ENCODE measurements at regions of chr1 and their contacts with region 1.

Region 1: DNA sequence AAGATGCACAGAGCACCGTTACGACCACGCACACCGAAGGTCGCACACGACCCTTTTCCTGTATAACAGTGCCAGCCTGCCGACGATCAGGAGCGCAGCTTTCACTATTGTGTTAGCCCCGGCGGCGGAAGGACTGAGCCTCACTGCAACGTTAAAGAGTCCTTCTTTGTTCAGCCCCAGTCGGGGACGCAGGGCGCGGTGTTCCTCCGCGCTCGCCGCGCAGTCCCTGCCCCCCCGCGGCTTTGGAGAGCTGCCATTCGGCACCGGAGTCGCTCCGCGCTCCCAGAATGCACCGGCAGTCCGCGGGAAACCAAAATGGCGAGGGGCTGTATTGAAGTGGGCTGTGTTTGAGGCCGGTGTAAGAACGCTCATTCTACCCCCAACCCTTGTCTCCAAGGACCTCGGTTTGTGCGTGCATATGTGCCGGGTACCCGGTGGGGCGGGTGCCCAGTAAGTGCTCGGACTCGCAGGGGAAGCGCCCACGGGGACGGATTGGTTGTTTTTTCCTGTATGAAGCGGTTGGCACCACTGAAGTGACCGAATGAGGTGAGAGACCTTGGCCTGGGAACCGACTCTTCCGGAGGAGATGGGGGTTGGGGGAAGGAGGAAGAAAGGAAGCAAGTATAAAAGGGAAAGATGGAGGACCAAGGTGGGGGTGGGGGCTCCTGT is at the start of gene MTF2:
- DNase-seq: peak; percentile 87 to 96 (median 92)
- ATAC-seq: peak; percentile 85
- H3K4me3 ChIP-seq: peak within 1 kb of the TSS; percentile 86
- H3K4me3 Mint-ChIP-seq: peak within 1 kb of the TSS; percentile 99
- H3K27ac ChIP-seq: peak within 1 kb of the TSS; percentile 81 to 82
- H3K27ac Mint-ChIP-seq: peak within 1 kb of the TSS; percentile 96
- H3K4me1 ChIP-seq: peaks cover 17% of the 10 kb centered on the region
- H3K4me1 Mint-ChIP-seq: peaks cover 61% of the 10 kb centered on the region
- H3K27me3 ChIP-seq: no peaks in the 10 kb centered on the region
- H3K27me3 Mint-ChIP-seq: no peaks in the 10 kb centered on the region
- CTCF ChIP-seq: no peak
- total RNA-seq, gene MTF2: 37.9 to 39.3 TPM

Region 2: DNA sequence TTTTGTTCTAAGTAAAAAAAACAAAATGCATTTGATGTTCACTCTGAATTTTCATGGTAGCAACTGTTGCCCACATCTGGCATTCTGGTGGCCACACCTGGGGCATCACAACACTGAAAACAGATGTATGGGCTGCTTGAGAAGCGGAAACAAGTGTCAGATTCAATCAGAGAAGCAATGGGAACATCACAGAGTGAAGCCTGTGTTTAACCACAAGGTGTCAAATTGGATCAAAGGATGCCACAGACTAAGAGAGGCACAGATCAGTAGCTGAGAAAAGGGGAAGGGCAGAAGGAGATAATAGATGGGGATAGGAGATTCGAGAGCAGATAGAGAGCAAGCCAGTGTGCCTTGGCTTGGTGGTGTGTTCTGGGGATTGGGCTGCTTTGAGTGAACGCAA is 49.8 kb before region 1 on chr1:
- CTCF ChIA-PET with region 1: no interaction called
- POLR2A ChIA-PET with region 1: interaction called, 4 read pairs
- intact Hi-C with region 1: loop called in 1 of 2 experiments (anchors 5 kb)
- DNase-seq: peak in 10 of 14 experiments; percentile 9 to 80 (median 36)
- ATAC-seq: peak; percentile 92
- H3K4me3 ChIP-seq: no peak overlapping the region
- H3K4me3 Mint-ChIP-seq: peak overlapping the region; percentile 1
- H3K27ac ChIP-seq: peak overlapping the region in 1 of 2 donors; percentile 32
- H3K27ac Mint-ChIP-seq: peak overlapping the region; percentile 18
- H3K4me1 ChIP-seq: peaks cover 18% of the 10 kb centered on the region
- H3K4me1 Mint-ChIP-seq: peaks cover 30% of the 10 kb centered on the region
- H3K27me3 ChIP-seq: no peaks in the 10 kb centered on the region
- H3K27me3 Mint-ChIP-seq: no peaks in the 10 kb centered on the region
- CTCF ChIP-seq: no peak

Region 3: DNA sequence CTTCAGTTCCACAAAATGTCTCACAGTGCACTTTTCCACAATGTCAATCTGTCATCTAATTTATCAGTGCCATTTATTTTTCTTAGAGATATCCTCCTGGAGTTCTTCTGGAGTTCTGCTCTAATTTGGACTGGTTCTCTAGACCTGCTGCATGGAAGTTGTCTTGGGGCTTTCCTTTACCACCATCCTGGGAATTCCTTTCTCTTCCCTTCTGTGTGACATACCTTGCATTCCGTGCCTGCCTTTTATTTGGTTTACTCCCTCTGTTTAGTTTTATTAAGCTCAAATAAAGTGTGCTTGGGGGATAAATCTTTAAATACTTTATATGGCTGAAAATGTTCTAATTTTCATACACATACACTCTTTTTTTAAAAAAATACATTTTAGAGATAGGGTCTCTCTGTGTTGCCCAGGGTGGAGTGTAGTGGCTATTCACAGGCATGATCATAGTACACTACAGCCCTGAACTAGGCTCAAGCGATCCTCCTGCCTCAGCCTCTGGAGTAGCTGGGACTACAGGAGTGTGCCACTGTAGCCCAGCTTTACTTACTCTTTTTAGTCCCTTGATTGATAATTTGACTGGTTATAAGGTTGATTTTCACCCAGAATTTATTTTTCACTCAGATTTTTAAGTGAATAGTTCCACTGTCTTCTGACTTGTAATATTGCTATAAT is 14.3 kb after region 1 on chr1:
- CTCF ChIA-PET with region 1: interaction called, 7 read pairs
- POLR2A ChIA-PET with region 1: interaction called, 18 read pairs
- intact Hi-C with region 1: no loop called
- DNase-seq: no peak
- ATAC-seq: no peak
- H3K4me3 ChIP-seq: no peak overlapping the region
- H3K4me3 Mint-ChIP-seq: no peak overlapping the region
- H3K27ac ChIP-seq: no peak overlapping the region
- H3K27ac Mint-ChIP-seq: peak overlapping the region; percentile 38
- H3K4me1 ChIP-seq: peaks cover 11% of the 10 kb centered on the region
- H3K4me1 Mint-ChIP-seq: peaks cover 73% of the 10 kb centered on the region
- H3K27me3 ChIP-seq: no peaks in the 10 kb centered on the region
- H3K27me3 Mint-ChIP-seq: no peaks in the 10 kb centered on the region
- CTCF ChIP-seq: no peak

Region 4: DNA sequence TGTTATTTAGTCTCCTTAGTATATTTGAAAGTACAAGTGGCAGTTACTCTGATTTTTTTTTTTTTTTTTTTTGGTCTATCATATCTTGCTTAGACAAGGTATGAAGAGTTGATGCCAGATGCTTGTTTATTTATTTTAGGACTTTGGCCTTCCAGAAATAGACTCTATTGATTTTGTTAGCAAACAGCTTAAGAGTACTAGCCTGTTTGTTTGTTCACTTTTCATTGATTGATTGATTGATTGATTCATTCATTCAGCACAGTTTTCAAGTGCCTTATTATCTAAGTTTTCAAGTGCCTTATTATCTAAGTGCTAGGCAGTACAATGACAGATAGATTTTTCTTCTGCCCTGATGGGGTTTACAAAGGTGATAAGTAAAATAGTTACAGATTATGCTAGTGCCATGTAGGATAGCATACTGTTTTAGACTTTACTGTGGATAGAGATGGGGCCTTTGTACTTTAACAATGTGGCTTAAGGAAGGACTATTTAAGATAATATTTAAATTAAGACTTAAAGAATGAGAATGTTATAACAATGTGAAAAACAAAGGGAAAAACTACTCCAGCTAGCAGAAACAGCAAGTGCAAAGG is 50.5 kb after region 1 on chr1:
- CTCF ChIA-PET with region 1: no interaction called
- POLR2A ChIA-PET with region 1: no interaction called
- intact Hi-C with region 1: loop called in 1 of 2 experiments (anchors 5 kb)
- DNase-seq: no peak
- ATAC-seq: no peak
- H3K4me3 ChIP-seq: no peak overlapping the region
- H3K4me3 Mint-ChIP-seq: no peak overlapping the region
- H3K27ac ChIP-seq: no peak overlapping the region
- H3K27ac Mint-ChIP-seq: no peak overlapping the region
- H3K4me1 ChIP-seq: no peaks in the 10 kb centered on the region
- H3K4me1 Mint-ChIP-seq: peaks cover 7% of the 10 kb centered on the region
- H3K27me3 ChIP-seq: no peaks in the 10 kb centered on the region
- H3K27me3 Mint-ChIP-seq: no peaks in the 10 kb centered on the region
- CTCF ChIP-seq: no peak

Region 5: DNA sequence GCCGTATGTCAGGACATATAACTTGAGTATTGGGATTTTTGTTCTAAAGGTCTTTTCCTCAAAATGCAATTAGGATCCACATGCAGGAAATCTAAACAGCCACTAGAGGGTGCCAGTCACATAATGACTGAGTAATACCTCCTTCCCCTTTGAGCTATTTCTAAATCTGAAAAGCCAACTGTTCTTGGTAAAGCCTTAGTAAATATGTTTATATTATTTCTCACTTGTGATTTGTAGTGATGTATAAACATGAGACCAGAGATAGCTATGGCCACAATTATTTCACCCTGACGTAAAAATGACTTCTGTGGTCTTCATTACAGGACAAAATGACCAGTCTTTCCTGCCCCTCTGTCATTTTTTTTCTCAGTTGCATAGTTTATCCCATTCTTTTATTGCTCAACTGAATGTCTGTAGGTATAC is 225.6 kb after region 1 on chr1:
- CTCF ChIA-PET with region 1: interaction called, 11 read pairs
- POLR2A ChIA-PET with region 1: interaction called, 3 read pairs
- intact Hi-C with region 1: loop called in 1 of 2 experiments (anchors 5 kb)
- DNase-seq: peak in 12 of 14 experiments; percentile 5 to 80 (median 34)
- ATAC-seq: peak; percentile 73
- H3K4me3 ChIP-seq: no peak overlapping the region
- H3K4me3 Mint-ChIP-seq: no peak overlapping the region
- H3K27ac ChIP-seq: no peak overlapping the region
- H3K27ac Mint-ChIP-seq: no peak overlapping the region
- H3K4me1 ChIP-seq: no peaks in the 10 kb centered on the region
- H3K4me1 Mint-ChIP-seq: no peaks in the 10 kb centered on the region
- H3K27me3 ChIP-seq: no peaks in the 10 kb centered on the region
- H3K27me3 Mint-ChIP-seq: no peaks in the 10 kb centered on the region
- CTCF ChIP-seq: peak; percentile 92

Region 6: GRCh38 chr1:93447516-93448291 is 368.6 kb after region 1 on chr1 and contains the start of gene FNBP1L:
- CTCF ChIA-PET with region 1: no interaction called
- POLR2A ChIA-PET with region 1: interaction called, 6 read pairs
- intact Hi-C with region 1: loop called in 1 of 2 experiments (anchors 10 kb)
- DNase-seq: peak; percentile 20 to 79 (median 54)
- ATAC-seq: peak; percentile 82
- H3K4me3 ChIP-seq: peak within 1 kb of the TSS; percentile 65
- H3K4me3 Mint-ChIP-seq: peak within 1 kb of the TSS; percentile 97
- H3K27ac ChIP-seq: no peak within 1 kb of the TSS
- H3K27ac Mint-ChIP-seq: peak within 1 kb of the TSS; percentile 59
- H3K4me1 ChIP-seq: peaks cover 20% of the 10 kb centered on the region
- H3K4me1 Mint-ChIP-seq: peaks cover 27% of the 10 kb centered on the region
- H3K27me3 ChIP-seq: peaks cover 16 to 37% of the 10 kb centered on the region in 2 experiments
- H3K27me3 Mint-ChIP-seq: peaks cover 42% of the 10 kb centered on the region
- CTCF ChIP-seq: no peak
- total RNA-seq, gene FNBP1L: 1.1 TPM

Measured in CD4-positive, alpha-beta T cell (primary cell).